Ascending aorta (tissue), 2 donors: ENCODE measurements at regions of chr11 and their contacts with region 1.

Region 1: DNA sequence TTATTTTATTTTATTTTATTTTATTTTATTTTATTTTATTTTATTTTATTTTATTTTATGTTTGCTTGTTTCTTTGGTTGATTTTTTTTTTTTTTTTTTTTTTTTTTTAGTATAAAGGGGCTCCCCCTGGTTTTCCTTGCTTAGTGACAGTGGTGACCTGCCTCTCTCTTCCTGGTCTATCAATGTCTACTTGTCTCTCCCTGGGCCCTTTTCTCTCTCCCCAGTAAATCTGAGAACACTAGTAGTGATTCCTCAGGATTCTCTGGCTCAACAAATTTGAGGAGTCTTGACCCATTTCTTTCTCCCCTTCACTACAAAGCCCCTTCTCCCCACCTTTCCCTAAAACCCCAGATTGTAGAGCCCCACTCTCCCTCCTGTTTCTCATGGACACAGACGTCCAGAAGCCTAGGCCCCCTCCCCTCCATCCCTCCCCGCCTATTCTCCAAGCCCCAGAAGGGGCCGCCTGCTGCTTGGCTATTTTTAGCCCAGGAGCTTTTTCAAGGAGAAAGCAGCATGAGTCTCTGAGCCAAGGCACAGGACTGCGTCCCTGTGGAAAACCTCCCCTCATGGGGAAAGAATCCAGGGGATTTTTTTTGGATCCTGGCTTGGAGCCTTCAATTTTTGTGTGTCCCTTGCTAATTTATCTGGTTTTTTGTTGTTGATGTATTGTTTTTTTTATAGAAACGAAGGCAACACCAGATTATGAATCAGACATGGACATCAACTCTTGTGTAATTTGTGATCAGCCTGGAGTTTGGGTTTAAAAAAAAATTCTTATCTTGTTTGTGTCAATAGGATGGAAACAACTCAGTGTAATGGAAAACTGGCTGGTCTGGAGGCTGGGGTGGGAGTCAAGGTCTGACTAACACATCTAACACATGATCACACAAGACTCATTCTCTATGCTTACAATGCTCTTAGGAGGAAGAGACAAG is 17.5 kb upstream of the ACCSL start:
- DNase-seq: peak in 1 of 2 donors; percentile 92
- H3K4me3 ChIP-seq: no peak overlapping the region
- H3K27ac ChIP-seq: peak overlapping the region; percentile 92 to 96
- H3K4me1 ChIP-seq: peaks cover 29 to 44% of the 10 kb centered on the region in 2 donors
- H3K27me3 ChIP-seq: no peaks in the 10 kb centered on the region
- CTCF ChIP-seq: no peak

Region 2: GRCh38 chr11:43687120-43687791 is 343.0 kb before region 1 on chr11:
- intact Hi-C with region 1: loop called (anchors 5 kb)
- DNase-seq: peak; percentile 13 to 86
- H3K4me3 ChIP-seq: no peak overlapping the region
- H3K27ac ChIP-seq: peak overlapping the region; percentile 51 to 79
- H3K4me1 ChIP-seq: peaks cover 13 to 36% of the 10 kb centered on the region in 2 donors
- H3K27me3 ChIP-seq: no peaks in the 10 kb centered on the region
- CTCF ChIP-seq: no peak

Region 3: GRCh38 chr11:43905813-43906241 is 124.4 kb before region 1 on chr11:
- intact Hi-C with region 1: loop called (anchors 5 kb)
- DNase-seq: no peak
- H3K4me3 ChIP-seq: peak overlapping the region in 1 of 2 donors; percentile 47
- H3K27ac ChIP-seq: peak overlapping the region; percentile 37 to 58
- H3K4me1 ChIP-seq: peaks cover 0 to 17% of the 10 kb centered on the region in 2 donors
- H3K27me3 ChIP-seq: no peaks in the 10 kb centered on the region
- CTCF ChIP-seq: no peak

Region 4: GRCh38 chr11:43962383-43963278 is 67.6 kb before region 1 on chr11:
- intact Hi-C with region 1: loop called (anchors 5 kb)
- DNase-seq: peak in 1 of 2 donors; percentile 21
- H3K4me3 ChIP-seq: peak overlapping the region in 1 of 2 donors; percentile 0
- H3K27ac ChIP-seq: peak overlapping the region; percentile 69 to 74
- H3K4me1 ChIP-seq: peaks cover 0 to 20% of the 10 kb centered on the region in 2 donors
- H3K27me3 ChIP-seq: no peaks in the 10 kb centered on the region
- CTCF ChIP-seq: no peak

Region 5: DNA sequence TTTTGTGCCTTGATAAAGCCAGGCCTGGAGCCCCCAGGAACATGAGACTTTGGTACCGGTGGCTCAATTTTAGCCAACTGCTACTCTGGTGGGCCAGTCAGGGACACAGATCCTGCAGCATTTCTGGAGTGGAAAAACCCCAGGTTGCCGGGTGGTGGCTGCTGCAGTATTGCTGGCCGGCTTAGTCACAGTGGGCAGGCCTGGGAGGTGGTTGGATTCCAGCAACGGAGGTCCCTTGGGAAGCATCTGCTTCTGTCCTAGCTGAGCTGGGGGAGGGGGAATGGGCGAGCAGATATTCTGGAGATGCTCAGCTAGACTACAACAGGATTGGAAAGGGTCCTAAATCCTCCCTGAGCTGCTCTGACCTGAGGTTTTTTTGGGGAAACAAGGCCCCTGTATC is 14.1 kb before region 1 on chr11:
- intact Hi-C with region 1: loop called (anchors 1 kb)
- DNase-seq: peak; percentile 67 to 94
- H3K4me3 ChIP-seq: no peak overlapping the region
- H3K27ac ChIP-seq: peak overlapping the region; percentile 83 to 93
- H3K4me1 ChIP-seq: peaks cover 9 to 57% of the 10 kb centered on the region in 2 donors
- H3K27me3 ChIP-seq: no peaks in the 10 kb centered on the region
- CTCF ChIP-seq: no peak